PC-9 (cell line): ENCODE measurements at regions of chr9 and their contacts with region 1.

Region 1: DNA sequence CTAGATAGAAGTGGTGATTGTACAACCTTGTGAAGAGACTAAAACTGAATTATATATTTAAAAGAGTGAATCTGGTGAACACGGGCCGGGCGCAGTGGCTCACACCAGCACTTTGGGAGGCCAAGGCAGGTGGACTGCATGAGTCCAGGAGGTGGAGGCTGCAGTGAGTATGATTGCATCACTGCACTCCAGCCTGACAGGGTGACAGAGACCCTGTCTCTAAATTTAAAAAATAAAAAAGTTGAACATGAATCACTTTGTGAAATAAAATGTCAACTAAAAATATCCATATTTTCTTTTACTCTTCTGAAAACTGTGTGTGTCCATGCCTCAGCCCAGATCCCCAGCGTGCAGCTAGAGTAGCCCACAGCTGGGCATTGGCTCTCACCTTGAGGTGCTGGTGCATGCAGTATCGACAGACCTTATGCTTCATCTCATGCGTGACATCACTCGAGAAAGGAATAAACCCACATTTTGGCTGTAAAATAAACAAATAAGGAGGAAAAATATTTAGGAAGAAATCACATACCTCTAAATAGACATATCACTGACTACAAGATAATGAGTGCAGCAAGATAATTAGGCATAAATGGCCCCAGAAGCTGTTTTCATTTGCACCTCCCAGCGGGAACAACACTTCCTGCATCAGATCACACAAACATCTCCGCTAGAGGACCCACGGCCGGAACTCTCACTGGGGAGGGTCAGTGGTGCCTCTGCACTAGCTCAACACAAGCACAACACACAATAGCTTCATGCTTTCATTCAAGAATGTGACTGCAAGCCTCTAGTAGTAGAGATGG is 22.1 kb downstream of the IPPK start:
- DNase-seq: no peak
- H3K4me3 ChIP-seq: no peak overlapping the region
- H3K27ac ChIP-seq: no peak overlapping the region
- H3K4me1 ChIP-seq: no peaks in the 10 kb centered on the region
- H3K27me3 ChIP-seq: no peaks in the 10 kb centered on the region
- CTCF ChIP-seq: no peak

Region 2: DNA sequence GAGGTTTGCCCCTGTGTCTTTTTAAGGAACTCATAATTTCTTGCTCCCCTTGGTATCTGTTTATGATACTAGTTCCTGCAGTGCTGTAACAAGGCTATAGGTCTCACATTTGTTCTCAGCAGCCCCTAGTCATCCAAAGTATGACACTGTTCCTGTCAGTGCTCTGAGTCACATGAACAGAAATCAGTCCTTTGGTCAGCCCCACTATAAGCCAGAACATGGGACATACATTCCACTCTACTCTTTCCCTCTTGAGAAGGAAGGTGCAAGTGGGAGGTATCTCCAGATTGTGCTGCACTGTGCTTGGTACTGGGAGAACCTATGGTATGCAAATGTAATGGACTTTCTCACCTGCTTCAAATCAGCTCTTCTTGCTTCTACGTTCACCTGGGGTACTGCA is 441.4 kb before region 1 on chr9:
- CTCF ChIA-PET with region 1: no interaction called
- POLR2A ChIA-PET with region 1: interaction called, 11 read pairs
- intact Hi-C with region 1: no loop called
- DNase-seq: no peak
- H3K4me3 ChIP-seq: no peak overlapping the region
- H3K27ac ChIP-seq: peak overlapping the region; percentile 9; the same call in 1 of the 2 replicates
- H3K4me1 ChIP-seq: no peaks in the 10 kb centered on the region
- H3K27me3 ChIP-seq: no peaks in the 10 kb centered on the region
- CTCF ChIP-seq: no peak

Region 3: DNA sequence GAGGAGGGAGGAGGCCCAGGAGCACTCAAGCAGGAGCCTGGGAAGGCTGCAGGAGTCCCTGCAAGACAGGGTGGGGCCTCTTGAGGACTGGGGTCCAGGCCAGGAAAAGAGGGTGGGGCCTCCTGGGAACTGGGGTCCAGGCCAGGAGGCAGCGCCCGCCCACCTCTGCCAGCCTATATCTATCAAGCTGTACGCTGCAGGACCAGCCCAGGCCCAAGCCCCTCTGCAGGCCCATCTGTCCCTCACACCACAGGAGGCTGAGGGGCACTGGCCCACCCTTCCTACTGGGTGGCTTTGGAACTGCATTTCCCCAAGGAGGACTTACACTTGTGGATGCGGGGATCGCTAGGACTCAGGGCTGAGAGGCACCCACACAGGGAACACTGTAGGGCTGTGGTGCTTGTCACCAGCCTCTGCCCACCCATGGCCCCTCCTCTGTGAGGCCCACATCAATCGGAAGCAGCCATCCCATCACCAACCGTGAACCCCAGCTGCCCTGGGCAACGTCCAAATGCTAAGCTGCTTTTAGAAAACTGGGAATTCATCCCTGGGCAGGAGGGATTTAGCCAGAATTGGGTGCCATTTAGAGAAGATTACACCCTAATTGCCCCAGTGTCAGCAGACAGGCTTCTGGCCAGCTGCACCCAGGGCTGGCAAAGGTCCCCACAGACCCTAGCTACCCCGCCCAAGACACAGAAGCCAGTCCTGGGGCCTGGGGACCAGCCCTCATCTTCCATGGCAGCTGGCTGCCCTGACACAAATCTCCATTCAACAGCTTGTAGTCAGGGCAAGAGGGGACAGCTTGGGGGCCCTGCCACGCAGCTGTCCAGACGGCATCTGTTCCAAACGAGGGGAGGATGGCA is 101.4 kb after region 1 on chr9:
- CTCF ChIA-PET with region 1: no interaction called
- POLR2A ChIA-PET with region 1: interaction called, 10 read pairs
- intact Hi-C with region 1: no loop called
- DNase-seq: no peak
- H3K4me3 ChIP-seq: no peak overlapping the region
- H3K27ac ChIP-seq: no peak overlapping the region
- H3K4me1 ChIP-seq: peaks cover 11% of the 10 kb centered on the region
- H3K27me3 ChIP-seq: no peaks in the 10 kb centered on the region
- CTCF ChIP-seq: no peak